ENCODE measurements at regions of chr16 and their contacts with region 1.

Region 1: DNA sequence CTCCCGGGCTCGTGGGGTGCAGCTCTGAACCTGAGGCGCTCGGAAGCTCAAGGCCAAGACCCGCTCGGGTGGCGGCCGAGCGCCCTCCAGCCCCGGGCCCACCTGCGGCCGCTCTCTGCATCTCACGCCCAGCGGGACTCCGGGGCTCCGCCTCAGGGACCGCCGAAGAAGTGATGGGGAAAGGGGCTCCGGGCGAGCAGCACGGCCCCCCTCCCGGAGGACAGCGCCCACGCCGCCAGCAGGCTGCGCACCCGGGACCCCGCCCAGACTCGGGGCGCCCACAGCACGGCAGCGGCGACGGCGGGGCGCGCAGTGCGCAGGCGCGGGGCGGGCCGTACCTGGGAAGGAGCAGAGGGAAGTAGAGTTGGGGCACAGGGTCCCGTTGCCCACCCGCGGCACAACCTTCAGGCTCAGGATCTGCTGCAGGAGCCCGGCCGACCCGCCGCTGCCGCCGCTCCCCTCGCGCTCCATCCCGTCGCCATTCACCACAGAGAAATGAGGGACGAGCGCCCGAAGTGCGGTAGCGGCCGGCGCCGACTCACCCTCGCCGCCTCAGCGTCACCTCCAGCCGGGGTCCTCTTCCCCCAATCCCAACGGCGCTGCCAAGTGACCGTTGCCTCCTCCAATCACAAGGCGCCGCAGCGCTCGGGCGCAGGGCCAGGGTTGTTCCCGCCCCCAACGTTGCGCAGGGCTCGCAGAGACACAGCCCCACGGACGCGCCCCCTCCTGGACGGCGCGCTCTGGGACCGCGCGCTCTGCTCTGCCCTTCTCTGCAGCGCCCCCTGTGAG is at the start of gene TMEM170A:
- DNase-seq: peak; percentile 99
- ATAC-seq: peak; percentile 98 to 99
- H3K4me3 ChIP-seq: peak within 1 kb of the TSS; percentile 74 to 95 (median 82)
- H3K27ac ChIP-seq: peak within 1 kb of the TSS; percentile 90 to 96 (median 94)
- H3K4me1 ChIP-seq: peaks cover 0 to 14% of the 10 kb centered on the region in 2 donors
- H3K27me3 ChIP-seq: no peaks in the 10 kb centered on the region
- CTCF ChIP-seq: peak; percentile 100
- POLR2A ChIP-seq: peak; percentile 95 to 97
- total RNA-seq, gene TMEM170A: 7.9 to 9.8 (median 8.6) TPM

Region 2: DNA sequence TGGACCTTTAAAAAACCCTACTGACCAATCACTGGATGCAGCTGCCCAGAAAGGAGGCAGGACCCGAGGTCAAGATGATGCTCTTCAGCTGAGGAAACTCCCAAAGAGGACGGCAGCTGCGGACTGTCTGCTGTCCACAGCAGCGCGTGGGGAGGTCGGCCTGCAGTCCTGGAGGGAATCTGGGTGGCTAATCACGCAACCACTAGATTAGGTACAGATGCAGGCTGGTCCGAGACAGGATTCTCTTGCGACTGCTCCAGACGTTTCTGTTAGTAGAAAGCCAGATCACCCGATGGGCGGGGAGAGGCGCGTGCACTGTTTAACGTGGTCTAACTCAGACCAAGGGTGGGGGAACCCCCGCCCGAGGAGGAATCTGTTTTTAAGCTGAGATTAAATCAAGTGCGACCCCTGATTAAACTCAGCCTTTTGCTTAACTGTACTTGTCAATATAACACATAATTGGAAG is 266.2 kb before region 1 on chr16:
- in situ Hi-C with region 1: no loop called
- intact Hi-C with region 1: loop called (anchors 5 kb)
- DNase-seq: no peak
- ATAC-seq: no peak
- H3K4me3 ChIP-seq: no peak overlapping the region
- H3K27ac ChIP-seq: no peak overlapping the region
- H3K4me1 ChIP-seq: no peaks in the 10 kb centered on the region
- H3K27me3 ChIP-seq: peaks cover 0 to 10% (median 7%) of the 10 kb centered on the region in 3 donors
- CTCF ChIP-seq: no peak
- POLR2A ChIP-seq: no peak

Region 3: DNA sequence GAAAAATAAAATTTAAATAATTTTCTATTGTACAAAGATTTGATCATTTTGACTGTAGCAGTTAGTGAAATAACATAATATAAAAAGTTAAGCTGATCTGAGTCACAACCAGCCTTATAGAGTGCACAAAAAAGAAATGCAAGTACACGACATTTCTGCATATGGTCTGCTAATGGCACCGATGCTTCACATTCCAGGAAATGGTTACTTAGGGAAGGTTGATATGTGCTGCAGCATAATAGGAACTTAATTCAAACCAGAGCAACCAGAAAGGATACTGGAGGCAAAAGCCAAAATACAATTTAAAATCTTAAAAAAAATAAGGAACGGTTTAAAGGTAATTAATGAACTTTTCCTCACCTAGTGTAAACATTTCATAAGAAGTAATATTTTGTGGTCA is 21.0 kb before region 1 on chr16:
- in situ Hi-C with region 1: no loop called
- intact Hi-C with region 1: no loop called
- DNase-seq: no peak
- ATAC-seq: no peak
- H3K4me3 ChIP-seq: no peak overlapping the region
- H3K27ac ChIP-seq: no peak overlapping the region
- H3K4me1 ChIP-seq: no peaks in the 10 kb centered on the region
- H3K27me3 ChIP-seq: no peaks in the 10 kb centered on the region
- CTCF ChIP-seq: no peak
- POLR2A ChIP-seq: no peak

Region 4: GRCh38 chr16:75519881-75520280 is 55.6 kb after region 1 on chr16:
- in situ Hi-C with region 1: loop called in 1 of 4 experiments (anchors 10 kb)
- intact Hi-C with region 1: loop called (anchors 1 kb)
- DNase-seq: no peak
- ATAC-seq: no peak
- H3K4me3 ChIP-seq: no peak overlapping the region
- H3K27ac ChIP-seq: no peak overlapping the region
- H3K4me1 ChIP-seq: peaks cover 0 to 6% of the 10 kb centered on the region in 2 donors
- H3K27me3 ChIP-seq: no peaks in the 10 kb centered on the region
- CTCF ChIP-seq: no peak
- POLR2A ChIP-seq: no peak

Region 5: GRCh38 chr16:75622761-75623605 is 158.7 kb after region 1 on chr16 and contains the start of gene ADAT1:
- in situ Hi-C with region 1: loop called in 1 of 4 experiments (anchors 25 kb)
- intact Hi-C with region 1: loop called (anchors 1 kb)
- DNase-seq: peak; percentile 97
- ATAC-seq: peak; percentile 95 to 98
- H3K4me3 ChIP-seq: peak within 1 kb of the TSS; percentile 71 to 86 (median 78)
- H3K27ac ChIP-seq: peak within 1 kb of the TSS; percentile 86 to 93 (median 90)
- H3K4me1 ChIP-seq: peaks cover 19 to 20% of the 10 kb centered on the region in 2 donors
- H3K27me3 ChIP-seq: no peaks in the 10 kb centered on the region
- CTCF ChIP-seq: peak in 1 of 5 experiments; percentile 3
- POLR2A ChIP-seq: peak; percentile 85 to 86
- total RNA-seq, gene ADAT1: 14.7 to 44.8 (median 19.0) TPM

Region 6: GRCh38 chr16:77190478-77191258 is 1726.3 kb after region 1 on chr16 and contains the start of gene MON1B:
- in situ Hi-C with region 1: loop called in 1 of 4 experiments (anchors 25 kb)
- intact Hi-C with region 1: no loop called
- DNase-seq: peak; percentile 98 to 99
- ATAC-seq: peak; percentile 98
- H3K4me3 ChIP-seq: peak within 1 kb of the TSS; percentile 80 to 93 (median 90)
- H3K27ac ChIP-seq: peak within 1 kb of the TSS; percentile 93 to 96 (median 95)
- H3K4me1 ChIP-seq: peaks cover 12 to 15% of the 10 kb centered on the region in 2 donors
- H3K27me3 ChIP-seq: no peaks in the 10 kb centered on the region
- CTCF ChIP-seq: no peak
- POLR2A ChIP-seq: peak; percentile 48 to 72
- total RNA-seq, gene MON1B: 6.6 to 14.6 (median 10.6) TPM

Measured in gastrocnemius medialis (tissue), 4 donors.